ENCODE measurements at regions of chr9 and their contacts with region 1.

Region 1: GRCh38 chr9:127224178-127224882 is 40.2 kb upstream of the GARNL3 start:
- DNase-seq: peak; percentile 99
- ATAC-seq: peak; percentile 89
- H3K4me3 Mint-ChIP-seq: peak overlapping the region; percentile 80
- H3K27ac Mint-ChIP-seq: peak overlapping the region; percentile 95
- H3K4me1 Mint-ChIP-seq: peaks cover 20% of the 10 kb centered on the region
- H3K27me3 Mint-ChIP-seq: peaks cover 36% of the 10 kb centered on the region
- CTCF ChIP-seq: no peak

Region 2: DNA sequence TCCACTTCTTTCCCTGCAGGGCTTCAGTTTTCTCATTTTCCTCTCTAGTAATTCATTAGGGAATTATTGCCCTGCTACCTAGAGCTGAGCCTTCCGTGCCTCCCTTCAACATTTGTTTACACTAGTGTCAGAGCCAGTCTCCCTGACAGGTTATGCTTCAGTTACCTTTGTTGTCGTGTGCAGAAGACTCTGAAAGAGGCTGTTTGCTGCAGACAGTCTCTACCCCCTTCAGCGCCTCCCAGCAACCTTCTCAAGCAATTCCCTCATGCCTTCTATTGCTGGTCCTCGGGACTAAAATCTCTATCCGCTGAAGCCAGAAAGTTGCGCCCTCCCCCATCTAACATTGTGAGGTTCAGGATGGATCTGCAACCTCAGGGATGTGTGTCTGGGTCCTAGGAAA is 296.9 kb before region 1 on chr9:
- CTCF ChIA-PET with region 1: no interaction called
- POLR2A ChIA-PET with region 1: no interaction called
- DNase-seq: no peak
- ATAC-seq: no peak
- H3K4me3 Mint-ChIP-seq: no peak overlapping the region
- H3K27ac Mint-ChIP-seq: no peak overlapping the region
- H3K4me1 Mint-ChIP-seq: no peaks in the 10 kb centered on the region
- H3K27me3 Mint-ChIP-seq: no peaks in the 10 kb centered on the region; the same call in 1 of the 2 replicates
- CTCF ChIP-seq: no peak

Region 3: DNA sequence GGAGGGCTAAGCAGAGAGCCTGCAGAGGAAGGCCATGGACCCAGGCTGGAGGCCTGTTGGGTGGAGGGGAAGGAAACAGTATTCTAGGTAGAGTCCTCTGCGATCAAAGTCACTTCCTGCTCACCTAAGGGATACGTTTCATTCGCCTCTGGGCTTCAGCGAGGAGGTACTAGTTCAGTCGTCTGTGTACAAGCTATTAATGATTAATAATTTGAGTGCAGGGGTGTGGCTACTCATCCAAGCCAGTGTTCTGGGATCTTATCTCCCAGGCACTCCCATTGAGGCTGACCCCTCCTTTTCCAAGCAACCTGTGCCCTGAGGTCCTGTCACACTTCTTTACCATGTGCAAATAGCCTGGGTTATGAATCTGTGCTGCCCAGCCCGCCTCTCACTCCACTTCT is 284.5 kb before region 1 on chr9:
- CTCF ChIA-PET with region 1: interaction called, 11 read pairs
- POLR2A ChIA-PET with region 1: no interaction called
- DNase-seq: no peak
- ATAC-seq: no peak
- H3K4me3 Mint-ChIP-seq: no peak overlapping the region
- H3K27ac Mint-ChIP-seq: no peak overlapping the region
- H3K4me1 Mint-ChIP-seq: peaks cover 16% of the 10 kb centered on the region
- H3K27me3 Mint-ChIP-seq: no peaks in the 10 kb centered on the region
- CTCF ChIP-seq: no peak

Region 4: DNA sequence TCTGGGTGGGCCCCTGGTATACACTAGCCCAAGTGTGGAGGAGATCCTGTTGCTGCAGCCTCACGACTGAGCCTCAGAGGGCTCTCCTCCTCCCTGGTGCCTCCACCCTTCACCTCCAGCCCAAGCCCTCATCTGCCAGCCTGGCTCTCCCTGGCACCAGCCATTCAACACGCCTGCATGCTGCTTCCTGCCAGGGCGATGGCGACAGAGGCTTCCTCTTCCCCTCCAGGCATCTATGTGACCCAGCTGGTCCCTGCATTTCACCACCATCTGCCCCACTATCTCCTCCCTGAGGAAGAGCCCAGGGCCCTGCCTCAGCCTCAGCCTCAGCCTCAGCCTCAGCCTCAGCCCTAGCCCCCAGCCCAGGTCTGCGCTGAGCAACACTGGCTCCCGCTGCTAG is 47.1 kb before region 1 on chr9:
- CTCF ChIA-PET with region 1: no interaction called
- POLR2A ChIA-PET with region 1: no interaction called
- DNase-seq: peak; percentile 7
- ATAC-seq: no peak
- H3K4me3 Mint-ChIP-seq: no peak overlapping the region
- H3K27ac Mint-ChIP-seq: no peak overlapping the region
- H3K4me1 Mint-ChIP-seq: no peaks in the 10 kb centered on the region
- H3K27me3 Mint-ChIP-seq: no peaks in the 10 kb centered on the region; the same call in 1 of the 2 replicates
- CTCF ChIP-seq: no peak

Region 5: DNA sequence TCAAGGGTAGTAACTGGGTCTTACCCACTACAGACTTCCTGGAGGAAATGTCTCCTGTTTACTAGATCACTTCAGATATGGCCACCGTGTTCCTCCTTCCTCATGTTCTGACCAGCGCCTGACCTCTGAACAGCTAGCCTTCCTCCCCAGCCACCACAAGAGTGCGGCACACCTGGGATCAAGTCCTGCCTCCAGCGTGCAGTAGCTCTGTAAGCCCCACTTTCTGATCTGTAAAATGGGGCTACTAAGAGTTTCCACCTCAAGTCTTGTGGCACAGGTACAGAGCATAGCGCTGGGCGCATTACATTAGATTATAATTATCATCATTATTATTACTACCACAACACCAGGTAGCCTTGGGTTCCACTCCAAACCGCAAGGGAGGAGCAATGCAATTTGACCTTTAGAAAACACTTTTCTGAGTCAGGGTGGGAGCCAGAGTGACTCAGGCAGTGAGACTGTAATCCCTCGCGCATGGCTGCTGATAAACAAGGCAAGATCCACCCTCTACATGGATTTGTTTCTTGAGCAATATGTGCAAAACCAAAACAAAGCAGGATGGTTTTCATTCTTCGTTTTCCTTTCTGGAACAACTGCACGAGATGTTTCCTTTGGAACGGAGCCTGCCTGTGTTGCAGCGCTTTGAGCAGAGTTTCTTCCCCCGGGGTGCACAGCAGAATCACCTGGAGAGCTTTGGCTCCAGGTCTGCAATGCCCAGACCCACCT is 36.9 kb before region 1 on chr9:
- CTCF ChIA-PET with region 1: no interaction called
- POLR2A ChIA-PET with region 1: no interaction called
- DNase-seq: no peak
- ATAC-seq: no peak
- H3K4me3 Mint-ChIP-seq: no peak overlapping the region
- H3K27ac Mint-ChIP-seq: peak overlapping the region; percentile 60; the same call in 1 of the 2 replicates
- H3K4me1 Mint-ChIP-seq: peaks cover 12% of the 10 kb centered on the region
- H3K27me3 Mint-ChIP-seq: no peaks in the 10 kb centered on the region
- CTCF ChIP-seq: no peak

Region 6: DNA sequence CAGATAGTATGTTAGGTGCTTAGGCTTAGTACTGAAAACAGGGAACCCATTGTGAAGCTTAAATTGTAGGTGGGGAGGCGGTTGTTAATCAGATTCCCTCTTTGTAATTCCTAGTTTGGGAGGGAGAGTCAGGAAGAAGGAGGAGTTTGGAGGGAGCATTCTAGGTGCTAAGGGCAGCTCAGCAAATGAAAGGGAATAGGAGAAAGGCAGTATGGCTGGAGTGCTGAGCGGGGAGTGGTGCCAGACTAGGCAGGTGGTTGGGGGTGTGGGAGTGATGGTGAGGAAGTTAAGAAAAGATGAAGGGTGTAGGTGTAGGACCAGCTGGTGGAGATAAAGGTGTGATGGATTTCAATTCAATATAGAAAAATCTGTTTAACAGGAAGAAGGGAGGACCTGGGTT is 29.1 kb after region 1 on chr9:
- CTCF ChIA-PET with region 1: interaction called, 12 read pairs
- POLR2A ChIA-PET with region 1: interaction called, 4 read pairs
- DNase-seq: no peak
- ATAC-seq: peak; percentile 96
- H3K4me3 Mint-ChIP-seq: peak overlapping the region; percentile 23
- H3K27ac Mint-ChIP-seq: peak overlapping the region; percentile 80
- H3K4me1 Mint-ChIP-seq: peaks cover 76% of the 10 kb centered on the region
- H3K27me3 Mint-ChIP-seq: no peaks in the 10 kb centered on the region
- CTCF ChIP-seq: no peak

Region 7: DNA sequence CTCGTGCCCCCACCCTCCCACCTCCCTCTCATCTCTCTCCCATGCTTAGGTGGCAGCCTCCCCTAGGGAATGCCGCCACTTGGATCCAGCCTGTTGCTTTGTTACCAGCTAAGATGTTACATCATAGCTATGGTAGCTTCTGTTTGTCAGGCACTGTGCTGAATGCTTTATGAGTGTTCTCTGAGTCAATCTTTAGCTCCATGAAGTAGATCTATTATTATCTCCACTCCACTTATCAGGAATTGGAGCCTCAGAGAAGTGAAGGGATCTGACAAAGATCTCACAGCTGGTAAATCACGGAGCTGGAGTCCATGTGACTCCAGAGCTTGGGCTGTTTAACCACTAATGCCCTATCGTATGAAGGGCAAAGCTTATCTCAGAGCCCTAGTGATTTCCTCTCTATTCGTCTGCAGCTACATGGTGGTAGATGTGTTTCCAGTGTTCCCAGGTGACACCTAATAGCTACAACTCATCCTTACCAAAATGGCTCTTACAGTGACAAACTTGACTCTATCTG is 94.4 kb after region 1 on chr9:
- CTCF ChIA-PET with region 1: no interaction called
- POLR2A ChIA-PET with region 1: no interaction called
- DNase-seq: no peak
- ATAC-seq: no peak
- H3K4me3 Mint-ChIP-seq: no peak overlapping the region
- H3K27ac Mint-ChIP-seq: no peak overlapping the region
- H3K4me1 Mint-ChIP-seq: no peaks in the 10 kb centered on the region
- H3K27me3 Mint-ChIP-seq: no peaks in the 10 kb centered on the region
- CTCF ChIP-seq: no peak

Region 8: GRCh38 chr9:127396808-127397497 is 172.6 kb after region 1 on chr9 and contains the start of gene SLC2A8:
- CTCF ChIA-PET with region 1: interaction called, 44 read pairs
- POLR2A ChIA-PET with region 1: interaction called, 12 read pairs
- DNase-seq: peak; percentile 99
- ATAC-seq: peak; percentile 97
- H3K4me3 Mint-ChIP-seq: peak within 1 kb of the TSS; percentile 80
- H3K27ac Mint-ChIP-seq: peak within 1 kb of the TSS; percentile 95
- H3K4me1 Mint-ChIP-seq: peaks cover 13% of the 10 kb centered on the region
- H3K27me3 Mint-ChIP-seq: peaks cover 17% of the 10 kb centered on the region
- CTCF ChIP-seq: no peak
- total RNA-seq, gene SLC2A8: 30.2 to 37.4 TPM (median 33.9 TPM) in 3 replicates

Region 9: GRCh38 chr9:127423934-127424675 is 199.8 kb after region 1 on chr9 and contains the start of gene ZNF79:
- CTCF ChIA-PET with region 1: interaction called, 12 read pairs
- POLR2A ChIA-PET with region 1: interaction called, 3 read pairs
- DNase-seq: peak; percentile 95
- ATAC-seq: peak; percentile 90
- H3K4me3 Mint-ChIP-seq: peak within 1 kb of the TSS; percentile 98
- H3K27ac Mint-ChIP-seq: peak within 1 kb of the TSS; percentile 99
- H3K4me1 Mint-ChIP-seq: peaks cover 29% of the 10 kb centered on the region
- H3K27me3 Mint-ChIP-seq: no peaks in the 10 kb centered on the region
- CTCF ChIP-seq: no peak
- total RNA-seq, gene ZNF79: 7.6 to 9.0 TPM (median 7.7 TPM) in 3 replicates